ENCODE measurements at regions of chr16 and their contacts with region 1.

Region 1: DNA sequence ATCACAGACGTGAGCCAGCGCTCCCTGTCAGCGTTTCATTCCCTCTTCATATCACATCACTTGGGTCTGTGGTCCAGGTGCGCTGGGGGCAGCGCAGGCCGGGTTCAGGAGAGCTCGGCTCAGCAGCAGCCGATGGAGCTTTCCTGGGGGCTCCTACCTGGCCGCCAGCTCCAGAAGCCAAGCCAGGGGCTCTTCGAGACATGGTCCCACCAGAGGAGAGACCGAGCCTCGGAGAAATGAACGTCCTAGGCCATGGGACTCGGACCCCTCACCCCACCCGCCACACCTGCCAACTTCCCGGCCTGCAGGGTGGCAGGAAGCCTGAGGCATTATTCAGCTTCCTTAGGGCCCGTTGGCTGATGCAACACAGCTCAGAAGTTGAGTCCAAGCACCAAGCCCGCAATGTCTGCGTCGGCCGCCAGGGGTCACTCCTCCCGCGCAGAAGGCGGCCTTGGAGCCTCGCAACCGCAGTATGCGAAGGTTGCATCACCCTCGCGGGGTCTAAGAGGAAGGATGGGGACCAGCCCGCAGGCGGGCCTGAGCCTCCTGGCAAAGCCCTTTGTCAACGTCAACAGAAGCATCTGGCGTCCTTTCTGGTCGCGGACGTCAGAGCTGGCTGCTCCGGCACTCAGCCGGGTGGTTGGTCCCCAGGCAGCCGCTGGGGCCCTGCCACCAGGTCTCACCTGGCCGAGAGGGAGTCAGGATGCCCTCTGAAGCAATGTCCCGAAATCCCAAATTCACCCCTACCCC is 13.2 kb upstream of the KLHDC4 start:
- DNase-seq: peak; percentile 95
- H3K4me3 ChIP-seq: no peak overlapping the region
- H3K27ac ChIP-seq: peak overlapping the region; percentile 79
- H3K4me1 ChIP-seq: peaks cover 22% of the 10 kb centered on the region
- H3K27me3 ChIP-seq: no peaks in the 10 kb centered on the region
- CTCF ChIP-seq: peak; percentile 85 to 99
- POLR2A ChIP-seq: no peak

Region 2: DNA sequence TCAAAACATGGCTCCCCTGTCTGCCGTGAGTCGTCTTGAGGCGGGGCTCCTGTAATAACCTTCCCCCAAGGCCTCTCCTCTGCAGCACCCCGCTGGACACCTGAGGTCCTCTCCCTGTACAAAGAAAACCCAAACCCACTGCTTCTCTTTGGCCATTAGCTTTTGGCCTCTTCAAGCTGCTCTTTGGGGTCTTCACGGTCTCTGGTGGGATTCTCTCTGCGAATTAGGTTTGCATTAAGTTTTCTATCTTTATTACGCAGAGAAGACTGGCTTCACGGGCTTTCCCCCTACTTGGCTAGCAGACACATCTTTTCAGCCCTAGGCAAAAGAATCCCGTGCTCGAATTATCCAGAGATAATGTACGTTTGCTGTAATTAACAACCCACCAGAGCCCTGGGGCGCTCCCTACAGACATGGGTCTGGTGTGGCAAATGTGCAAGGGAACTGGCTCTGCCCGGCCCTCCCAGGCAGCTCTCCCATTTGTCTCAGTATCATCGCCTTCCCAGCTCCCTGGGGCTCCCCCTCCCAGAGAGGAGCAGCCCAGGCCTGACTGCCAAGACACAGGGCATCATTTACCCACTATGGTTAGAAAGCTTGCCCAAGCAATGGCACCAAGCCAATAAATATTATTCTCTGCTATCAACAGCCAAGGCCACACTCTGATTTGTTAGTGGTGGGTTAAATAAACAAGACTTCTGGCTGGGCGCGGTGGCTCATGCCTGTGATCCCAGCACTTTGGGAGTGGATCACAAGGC is 11.4 kb after region 1 on chr16:
- CTCF ChIA-PET with region 1: interaction called, 16 read pairs
- POLR2A ChIA-PET with region 1: no interaction called
- dilution Hi-C with region 1: no loop called
- intact Hi-C with region 1: no loop called
- DNase-seq: no peak
- H3K4me3 ChIP-seq: no peak overlapping the region
- H3K27ac ChIP-seq: no peak overlapping the region
- H3K4me1 ChIP-seq: no peaks in the 10 kb centered on the region
- H3K27me3 ChIP-seq: peaks cover 0 to 2% of the 10 kb centered on the region in 2 experiments
- CTCF ChIP-seq: no peak
- POLR2A ChIP-seq: no peak

Region 3: GRCh38 chr16:87828071-87828971 is 49.3 kb after region 1 on chr16:
- CTCF ChIA-PET with region 1: interaction called, 19 read pairs
- POLR2A ChIA-PET with region 1: no interaction called
- dilution Hi-C with region 1: no loop called
- intact Hi-C with region 1: no loop called
- DNase-seq: no peak
- H3K4me3 ChIP-seq: no peak overlapping the region
- H3K27ac ChIP-seq: no peak overlapping the region
- H3K4me1 ChIP-seq: no peaks in the 10 kb centered on the region
- H3K27me3 ChIP-seq: peaks cover 0 to 2% of the 10 kb centered on the region in 2 experiments
- CTCF ChIP-seq: no peak
- POLR2A ChIP-seq: no peak

Region 4: GRCh38 chr16:87844120-87844733 is 65.2 kb after region 1 on chr16:
- CTCF ChIA-PET with region 1: interaction called, 177 read pairs
- POLR2A ChIA-PET with region 1: no interaction called
- dilution Hi-C with region 1: no loop called
- intact Hi-C with region 1: loop called (anchors 1 kb)
- DNase-seq: no peak
- H3K4me3 ChIP-seq: no peak overlapping the region
- H3K27ac ChIP-seq: no peak overlapping the region
- H3K4me1 ChIP-seq: peaks cover 9% of the 10 kb centered on the region
- H3K27me3 ChIP-seq: no peaks in the 10 kb centered on the region
- CTCF ChIP-seq: no peak
- POLR2A ChIP-seq: no peak

Region 5: DNA sequence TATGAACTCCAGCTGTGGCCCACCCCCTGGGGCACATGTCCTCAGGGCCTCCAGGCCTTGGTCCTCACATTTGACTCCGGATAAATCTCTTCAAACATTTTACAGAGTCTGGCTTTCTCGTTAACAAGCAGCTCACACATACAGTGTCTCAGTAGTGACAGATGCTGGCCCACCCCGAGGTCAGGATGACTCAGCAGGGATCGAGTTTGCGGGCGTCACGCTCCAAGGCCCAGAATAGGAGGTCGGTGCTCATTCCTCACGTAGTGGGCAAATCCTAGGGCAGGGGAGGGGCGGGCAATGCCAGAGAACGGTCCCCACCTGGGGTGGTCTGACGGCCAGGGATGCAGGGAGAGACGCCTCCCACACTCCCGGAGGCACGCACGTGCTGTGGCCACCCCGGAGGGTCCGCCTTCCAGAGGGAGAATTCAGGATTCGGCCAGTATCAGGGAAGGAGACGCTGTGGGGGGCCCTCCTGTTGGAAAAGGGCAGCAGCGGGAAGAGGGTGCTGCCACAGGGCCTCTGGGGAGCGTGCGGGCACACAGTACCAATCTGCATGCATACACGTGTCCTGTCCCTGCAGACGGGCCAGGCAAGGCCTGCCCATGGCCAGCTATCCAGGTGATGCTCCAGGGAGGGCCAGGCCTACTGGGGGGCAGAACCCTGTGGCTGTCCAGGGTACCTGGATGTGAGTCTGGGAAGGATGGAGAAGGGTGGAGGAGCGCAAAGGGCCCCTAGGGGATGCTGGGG is 81.7 kb after region 1 on chr16:
- CTCF ChIA-PET with region 1: interaction called, 470 read pairs
- POLR2A ChIA-PET with region 1: interaction called, 4 read pairs
- dilution Hi-C with region 1: no loop called
- intact Hi-C with region 1: no loop called
- DNase-seq: peak; percentile 38
- H3K4me3 ChIP-seq: no peak overlapping the region
- H3K27ac ChIP-seq: peak overlapping the region; percentile 35
- H3K4me1 ChIP-seq: peaks cover 4% of the 10 kb centered on the region
- H3K27me3 ChIP-seq: no peaks in the 10 kb centered on the region
- CTCF ChIP-seq: no peak
- POLR2A ChIP-seq: no peak

Region 6: DNA sequence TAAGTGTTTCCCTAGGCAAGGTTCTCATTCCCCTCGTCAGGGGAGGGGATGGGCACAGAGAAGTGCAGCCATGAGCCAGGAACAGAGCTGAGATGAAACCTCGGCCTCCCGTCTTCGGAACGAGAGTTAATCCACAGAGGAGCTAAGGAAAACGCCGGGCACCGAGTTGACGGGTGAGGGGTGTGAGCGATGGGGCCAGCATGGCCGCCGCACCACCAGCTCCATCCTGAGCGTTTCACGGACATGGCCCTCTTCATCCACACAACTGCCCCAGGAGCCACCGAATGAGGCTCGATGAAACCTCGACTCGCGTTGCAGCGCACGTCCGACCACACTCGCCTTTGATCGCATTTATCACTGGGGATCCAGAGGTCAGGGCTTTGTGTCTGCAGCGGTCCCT is 135.8 kb after region 1 on chr16:
- CTCF ChIA-PET with region 1: interaction called, 61 read pairs
- POLR2A ChIA-PET with region 1: no interaction called
- dilution Hi-C with region 1: no loop called
- intact Hi-C with region 1: no loop called
- DNase-seq: no peak
- H3K4me3 ChIP-seq: no peak overlapping the region
- H3K27ac ChIP-seq: no peak overlapping the region
- H3K4me1 ChIP-seq: no peaks in the 10 kb centered on the region
- H3K27me3 ChIP-seq: no peaks in the 10 kb centered on the region
- CTCF ChIP-seq: no peak
- POLR2A ChIP-seq: no peak

Region 7: DNA sequence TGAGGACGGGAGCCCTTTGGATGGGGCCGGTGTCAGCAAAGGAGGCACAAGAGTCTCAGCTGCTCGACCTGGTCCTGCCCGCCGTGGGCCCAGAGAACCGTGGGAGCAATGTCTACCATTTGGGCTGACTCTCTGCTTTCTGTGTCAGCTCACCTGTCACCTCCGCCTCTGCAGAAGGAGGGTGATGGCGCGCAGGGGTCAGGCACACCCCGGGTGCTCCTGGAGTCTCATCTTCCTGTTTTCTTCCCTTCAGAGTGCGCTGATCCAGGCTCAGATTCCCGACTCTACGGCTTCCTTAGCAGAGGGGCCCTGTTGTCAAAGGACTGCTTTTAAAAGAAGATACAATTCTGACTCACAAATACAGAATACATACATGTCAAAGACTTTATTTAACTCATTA is 339.4 kb after region 1 on chr16:
- CTCF ChIA-PET with region 1: no interaction called
- POLR2A ChIA-PET with region 1: no interaction called
- dilution Hi-C with region 1: no loop called
- intact Hi-C with region 1: no loop called
- DNase-seq: no peak
- H3K4me3 ChIP-seq: no peak overlapping the region
- H3K27ac ChIP-seq: peak overlapping the region; percentile 54
- H3K4me1 ChIP-seq: peaks cover 12% of the 10 kb centered on the region
- H3K27me3 ChIP-seq: no peaks in the 10 kb centered on the region
- CTCF ChIP-seq: no peak
- POLR2A ChIP-seq: no peak